HEK293 (cell line): ENCODE measurements at regions of chr16 and their contacts with region 1.

Region 1: GRCh38 chr16:228818-229730 is at the start of gene LUC7L:
- H3K4me3 ChIP-seq: peak within 1 kb of the TSS; percentile 89
- H3K27ac ChIP-seq: peak within 1 kb of the TSS; percentile 99
- H3K4me1 ChIP-seq: no peaks in the 10 kb centered on the region
- CTCF ChIP-seq: no peak

Region 2: DNA sequence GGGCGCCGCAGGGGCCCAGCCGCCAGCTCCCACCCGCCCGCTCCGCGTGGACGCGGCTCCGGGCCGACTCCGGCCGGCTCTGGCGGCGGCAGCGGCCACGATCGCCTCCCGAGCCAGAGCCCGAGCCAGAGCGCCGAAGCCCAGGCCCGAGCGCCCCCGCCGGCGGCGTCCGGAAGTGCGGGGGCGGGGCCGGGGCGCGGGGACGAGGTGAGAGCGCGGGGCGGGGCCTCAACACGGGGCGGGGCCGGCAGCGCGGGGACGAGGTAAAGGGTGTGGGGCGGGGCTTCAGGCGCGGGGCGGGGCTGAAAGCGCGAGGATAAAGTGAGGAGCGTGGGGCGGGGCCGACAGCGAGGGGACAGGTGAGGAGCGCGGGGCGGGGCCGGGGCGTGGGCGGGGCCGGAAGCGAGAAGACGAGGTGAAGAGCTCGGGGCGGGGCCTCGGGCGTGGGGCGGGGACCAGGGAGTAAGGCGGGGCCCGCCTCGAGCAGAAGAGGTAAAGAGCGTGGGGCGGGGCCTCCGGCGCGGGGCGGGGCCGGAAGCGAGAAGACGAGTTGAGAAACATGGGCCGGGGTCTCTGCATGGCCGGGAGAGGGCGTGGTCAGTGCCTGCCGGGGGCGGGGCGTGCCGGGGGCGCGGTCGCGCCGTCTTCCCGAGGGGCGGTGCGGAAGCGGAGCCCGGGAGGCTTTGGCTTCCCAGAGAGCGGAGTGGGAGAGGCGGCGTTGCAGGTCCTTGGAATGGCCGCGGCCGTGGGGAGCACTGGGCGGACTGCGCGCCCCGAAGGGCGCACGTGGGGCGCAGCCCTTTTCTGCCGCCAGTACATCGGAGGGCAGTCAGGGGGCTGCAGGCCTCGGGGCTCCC is 123.7 kb after region 1 on chr16 and contains the start of gene AXIN1:
- CTCF ChIA-PET with region 1: interaction called, 3 read pairs
- POLR2A ChIA-PET with region 1: interaction called, 31 read pairs
- H3K4me3 ChIP-seq: peak within 1 kb of the TSS; percentile 51
- H3K27ac ChIP-seq: peak within 1 kb of the TSS; percentile 72; the same call in 1 of the 2 replicates
- H3K4me1 ChIP-seq: peaks cover 2% of the 10 kb centered on the region; the same call in 1 of the 2 replicates
- CTCF ChIP-seq: no peak

Region 3: GRCh38 chr16:370443-370842 is 141.4 kb after region 1 on chr16 and contains the start of gene MRPL28:
- CTCF ChIA-PET with region 1: no interaction called
- POLR2A ChIA-PET with region 1: no interaction called
- H3K4me3 ChIP-seq: peak within 1 kb of the TSS; percentile 47
- H3K27ac ChIP-seq: peak within 1 kb of the TSS; percentile 64; the same call in 1 of the 2 replicates
- H3K4me1 ChIP-seq: peaks cover 3% of the 10 kb centered on the region
- CTCF ChIP-seq: no peak

Region 4: DNA sequence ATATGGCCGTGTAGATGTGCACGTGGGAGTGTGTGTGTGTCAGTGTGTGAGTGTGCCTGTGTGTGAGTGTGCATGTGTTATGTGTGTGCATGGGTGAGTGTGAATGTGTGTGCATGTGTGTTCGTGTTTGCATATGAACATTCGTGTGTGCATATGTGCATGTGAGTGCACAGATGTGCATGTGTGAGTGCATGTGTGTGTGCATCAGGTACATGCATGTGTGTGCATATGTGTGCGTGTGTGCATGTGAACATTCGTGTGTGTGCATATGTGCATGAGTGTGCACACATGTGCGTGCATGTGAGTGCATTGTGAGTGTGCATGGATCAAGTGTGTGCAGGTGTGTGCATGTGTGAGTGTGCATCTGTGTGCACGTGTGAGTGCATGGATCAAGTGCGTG is 1008.9 kb after region 1 on chr16:
- CTCF ChIA-PET with region 1: no interaction called
- POLR2A ChIA-PET with region 1: interaction called, 13 read pairs
- H3K4me3 ChIP-seq: no peak overlapping the region
- H3K27ac ChIP-seq: no peak overlapping the region
- H3K4me1 ChIP-seq: no peaks in the 10 kb centered on the region
- CTCF ChIP-seq: no peak